Mammary epithelial cell (primary cell): ENCODE measurements at regions of chr6 and their contacts with region 1.

Region 1: GRCh38 chr6:130466052-130467048 is 100.5 kb downstream of the TMEM200A start:
- DNase-seq: peak; percentile 22
- H3K4me3 ChIP-seq: no peak overlapping the region
- H3K27ac ChIP-seq: no peak overlapping the region
- H3K4me1 ChIP-seq: peaks cover 4% of the 10 kb centered on the region
- H3K27me3 ChIP-seq: no peaks in the 10 kb centered on the region
- CTCF ChIP-seq: no peak

Region 2: GRCh38 chr6:130482645-130483390 is 16.5 kb after region 1 on chr6:
- CTCF ChIA-PET with region 1: no interaction called
- dilution Hi-C with region 1: no loop called
- in situ Hi-C with region 1: no loop called
- intact Hi-C with region 1: no loop called
- DNase-seq: peak; percentile 55
- H3K4me3 ChIP-seq: no peak overlapping the region
- H3K27ac ChIP-seq: no peak overlapping the region
- H3K4me1 ChIP-seq: peaks cover 12% of the 10 kb centered on the region
- H3K27me3 ChIP-seq: no peaks in the 10 kb centered on the region
- CTCF ChIP-seq: no peak

Region 3: DNA sequence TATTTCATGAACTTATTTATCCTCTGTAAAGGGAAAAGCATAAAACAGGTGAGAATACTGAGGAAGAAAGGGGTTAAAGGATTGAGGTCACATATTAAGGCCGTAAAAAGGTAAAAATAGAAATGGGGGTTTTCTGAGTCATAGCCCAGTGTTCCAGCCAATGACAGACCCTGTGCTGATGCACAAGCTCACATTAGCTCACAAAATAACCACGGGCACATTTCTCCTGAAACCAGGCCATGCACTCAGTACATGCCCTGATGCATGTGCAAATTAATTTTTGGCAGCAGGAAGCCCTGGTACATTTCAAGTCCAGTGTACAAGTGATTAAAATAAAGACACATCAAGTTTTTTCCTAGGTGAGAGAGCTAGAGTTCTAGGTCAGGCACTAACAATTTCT is 93.9 kb after region 1 on chr6:
- CTCF ChIA-PET with region 1: no interaction called
- dilution Hi-C with region 1: no loop called
- in situ Hi-C with region 1: no loop called
- intact Hi-C with region 1: no loop called
- DNase-seq: peak; percentile 1
- H3K4me3 ChIP-seq: no peak overlapping the region
- H3K27ac ChIP-seq: no peak overlapping the region
- H3K4me1 ChIP-seq: no peaks in the 10 kb centered on the region
- H3K27me3 ChIP-seq: no peaks in the 10 kb centered on the region
- CTCF ChIP-seq: no peak

Region 4: GRCh38 chr6:130602151-130602770 is 135.9 kb after region 1 on chr6:
- CTCF ChIA-PET with region 1: no interaction called
- dilution Hi-C with region 1: no loop called
- in situ Hi-C with region 1: no loop called
- intact Hi-C with region 1: loop called (anchors 5 kb)
- DNase-seq: peak; percentile 98
- H3K4me3 ChIP-seq: no peak overlapping the region
- H3K27ac ChIP-seq: peak overlapping the region; percentile 92
- H3K4me1 ChIP-seq: peaks cover 55% of the 10 kb centered on the region
- H3K27me3 ChIP-seq: no peaks in the 10 kb centered on the region
- CTCF ChIP-seq: no peak

Region 5: GRCh38 chr6:130620338-130620781 is 154.0 kb after region 1 on chr6:
- CTCF ChIA-PET with region 1: no interaction called
- dilution Hi-C with region 1: no loop called
- in situ Hi-C with region 1: no loop called
- intact Hi-C with region 1: no loop called
- DNase-seq: peak; percentile 24
- H3K4me3 ChIP-seq: no peak overlapping the region
- H3K27ac ChIP-seq: no peak overlapping the region
- H3K4me1 ChIP-seq: no peaks in the 10 kb centered on the region
- H3K27me3 ChIP-seq: no peaks in the 10 kb centered on the region
- CTCF ChIP-seq: no peak

Region 6: DNA sequence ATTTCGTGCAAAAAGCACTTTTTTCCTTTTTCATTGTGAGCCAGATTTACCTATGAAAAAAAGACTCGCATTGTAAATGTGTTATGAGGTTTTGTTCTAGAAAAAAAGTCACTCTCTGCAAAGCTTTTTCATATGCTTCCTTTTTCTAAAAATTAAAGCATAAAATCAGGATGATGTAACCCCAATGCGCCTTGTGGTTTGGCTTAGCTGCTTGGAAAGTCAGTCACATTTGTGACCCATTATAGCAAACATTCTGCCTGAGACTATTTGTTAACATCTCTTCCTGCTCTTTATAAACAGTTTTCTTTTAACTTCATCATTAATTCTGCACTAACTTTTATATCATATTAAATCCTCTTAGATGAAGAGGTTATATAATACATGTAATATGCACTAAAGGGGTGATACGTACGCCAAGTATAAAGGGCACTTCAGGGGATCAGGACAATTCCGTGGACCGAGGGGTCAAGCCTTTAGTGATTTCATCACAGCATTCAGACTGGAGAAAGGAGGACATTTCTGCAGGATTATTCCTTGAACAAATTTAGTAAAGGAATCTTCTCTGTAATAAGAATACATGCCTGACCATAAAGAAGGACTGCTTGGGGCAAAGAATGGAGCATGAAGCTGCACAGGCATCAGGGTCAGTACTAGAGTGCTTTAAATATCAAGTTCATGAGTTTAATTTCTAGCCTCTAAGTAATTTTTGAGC is 312.8 kb after region 1 on chr6:
- CTCF ChIA-PET with region 1: no interaction called
- dilution Hi-C with region 1: no loop called
- in situ Hi-C with region 1: no loop called
- intact Hi-C with region 1: no loop called
- DNase-seq: peak; percentile 5
- H3K4me3 ChIP-seq: no peak overlapping the region
- H3K27ac ChIP-seq: no peak overlapping the region
- H3K4me1 ChIP-seq: no peaks in the 10 kb centered on the region
- H3K27me3 ChIP-seq: no peaks in the 10 kb centered on the region
- CTCF ChIP-seq: no peak